ENCODE measurements at regions of chr2 and their contacts with region 1.

Region 1: GRCh38 chr2:11124503-11125068 is 30.7 kb upstream of the SLC66A3 start:
- DNase-seq: peak; percentile 70 to 86 (median 80)
- ATAC-seq: peak; percentile 86
- H3K4me3 ChIP-seq: no peak overlapping the region
- H3K27ac ChIP-seq: no peak overlapping the region
- H3K4me1 ChIP-seq: peaks cover 10 to 16% of the 10 kb centered on the region in 2 experiments; a peak in 3 of 5 replicates
- H3K27me3 ChIP-seq: peaks cover 3 to 60% of the 10 kb centered on the region in 2 experiments; a peak in 3 of 5 replicates
- CTCF ChIP-seq: peak; percentile 88 to 90 (median 90)
- EP300 ChIP-seq: no peak
- POLR2A ChIP-seq: no peak
- RAD21 ChIP-seq: peak; percentile 87 to 93

Region 2: GRCh38 chr2:10977003-10977402 is 147.6 kb before region 1 on chr2:
- CTCF ChIA-PET with region 1: no interaction called
- POLR2A ChIA-PET with region 1: no interaction called
- in situ Hi-C with region 1: no loop called
- intact Hi-C with region 1: loop called (anchors 10 kb)
- DNase-seq: peak in 2 of 4 experiments; percentile 16 to 19
- ATAC-seq: peak; percentile 56; the same call in 2 of the 3 replicates
- H3K4me3 ChIP-seq: no peak overlapping the region
- H3K27ac ChIP-seq: no peak overlapping the region
- H3K4me1 ChIP-seq: no peaks in the 10 kb centered on the region; a peak in 1 of 5 replicates
- H3K27me3 ChIP-seq: peaks cover 29 to 56% of the 10 kb centered on the region in 2 experiments; a peak in 3 of 5 replicates
- CTCF ChIP-seq: no peak
- EP300 ChIP-seq: no peak
- POLR2A ChIP-seq: no peak
- RAD21 ChIP-seq: no peak

Region 3: DNA sequence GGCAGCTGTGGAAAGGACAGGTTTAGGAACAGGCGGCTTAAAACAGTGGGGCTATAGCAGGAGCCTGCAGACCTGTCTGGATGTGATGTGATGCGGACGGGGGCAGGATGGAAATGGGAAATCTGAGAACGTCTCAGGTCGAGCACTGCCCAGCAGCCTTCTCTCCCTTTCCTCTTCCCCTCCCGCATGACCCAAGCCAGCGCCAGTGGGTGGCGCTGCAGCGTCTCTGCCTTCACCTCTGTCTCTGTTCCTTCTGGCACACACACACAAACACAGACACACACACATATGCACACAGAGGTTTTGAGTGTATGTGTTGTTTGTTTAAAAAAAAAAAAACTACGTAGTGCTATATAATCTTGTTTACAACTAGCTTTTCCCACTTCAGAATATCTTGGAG is 51.3 kb before region 1 on chr2:
- CTCF ChIA-PET with region 1: no interaction called
- POLR2A ChIA-PET with region 1: no interaction called
- in situ Hi-C with region 1: no loop called
- intact Hi-C with region 1: loop called (anchors 5 kb)
- DNase-seq: peak; percentile 27 to 73 (median 34)
- ATAC-seq: peak; percentile 93
- H3K4me3 ChIP-seq: no peak overlapping the region
- H3K27ac ChIP-seq: no peak overlapping the region
- H3K4me1 ChIP-seq: no peaks in the 10 kb centered on the region; a peak in 1 of 5 replicates
- H3K27me3 ChIP-seq: peaks cover 13 to 57% of the 10 kb centered on the region in 2 experiments; a peak in 4 of 5 replicates
- CTCF ChIP-seq: peak; percentile 67 to 78 (median 70)
- EP300 ChIP-seq: no peak
- POLR2A ChIP-seq: no peak
- RAD21 ChIP-seq: peak; percentile 21 to 51; a peak in 3 of 4 replicates

Region 4: DNA sequence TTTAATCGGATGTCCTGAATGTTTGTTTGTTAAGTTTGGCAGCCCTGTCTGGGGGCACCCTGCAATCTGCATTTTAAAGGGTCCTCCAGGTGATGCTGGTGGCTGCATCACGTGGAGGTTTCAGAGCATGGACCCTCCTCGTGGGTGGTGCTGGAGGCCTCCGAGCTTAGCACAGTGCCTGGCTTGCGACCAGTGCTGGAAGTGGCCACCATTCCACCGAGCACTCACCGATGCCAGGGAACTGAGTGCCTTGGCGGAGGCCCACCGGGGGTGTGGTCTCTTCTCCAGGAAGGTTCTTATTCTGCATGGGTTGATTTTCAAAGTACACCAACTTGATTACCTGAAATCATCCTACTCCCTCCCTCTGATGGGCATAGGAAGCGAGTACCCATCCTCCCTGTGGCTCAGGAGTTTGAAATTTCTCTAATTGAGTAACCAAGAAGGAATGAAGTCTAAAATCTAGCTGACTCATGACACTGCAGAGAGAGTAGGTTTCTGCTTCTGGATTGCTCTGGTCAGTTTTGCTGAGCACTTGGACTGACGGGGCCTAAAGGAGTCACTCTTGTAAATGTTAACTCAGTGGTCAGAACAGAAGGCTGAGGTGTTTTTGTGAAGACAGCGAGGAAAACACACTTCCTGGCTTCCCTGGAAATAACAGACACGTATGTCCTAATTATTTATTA is 27.4 kb before region 1 on chr2:
- CTCF ChIA-PET with region 1: no interaction called
- POLR2A ChIA-PET with region 1: no interaction called
- in situ Hi-C with region 1: no loop called
- intact Hi-C with region 1: no loop called
- DNase-seq: no peak
- ATAC-seq: no peak
- H3K4me3 ChIP-seq: no peak overlapping the region
- H3K27ac ChIP-seq: no peak overlapping the region
- H3K4me1 ChIP-seq: no peaks in the 10 kb centered on the region
- H3K27me3 ChIP-seq: peaks cover under 1 to 49% of the 10 kb centered on the region in 2 experiments; a peak in 3 of 5 replicates
- CTCF ChIP-seq: no peak
- EP300 ChIP-seq: no peak
- POLR2A ChIP-seq: no peak
- RAD21 ChIP-seq: no peak